Pancreas (tissue), 10 donors: ENCODE measurements at regions of chr2 and their contacts with region 1.

Region 1: DNA sequence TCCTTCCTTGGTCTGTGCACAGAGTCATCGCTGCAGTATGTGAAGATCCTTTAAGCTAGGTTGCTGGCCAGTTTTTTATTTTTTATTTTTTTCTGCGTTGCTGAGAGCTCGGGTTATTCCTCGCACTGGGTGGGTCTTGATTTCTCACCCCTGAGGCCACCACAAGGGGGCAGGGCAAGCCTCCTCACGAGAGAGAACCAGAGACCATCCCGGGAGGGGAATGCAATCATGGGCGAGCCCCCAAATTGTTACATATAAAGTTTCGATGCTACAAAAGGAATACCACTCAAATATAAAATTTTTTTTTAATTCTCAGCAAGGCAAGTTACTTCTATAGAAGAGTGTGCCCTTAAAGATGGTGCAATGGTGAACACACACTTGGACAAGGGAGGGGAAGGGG is 24.9 kb downstream of the HTR2B start:
- DNase-seq: no peak
- ATAC-seq: no peak
- H3K4me3 ChIP-seq: no peak overlapping the region
- H3K27ac ChIP-seq: no peak overlapping the region
- H3K4me1 ChIP-seq: no peaks in the 10 kb centered on the region
- H3K27me3 ChIP-seq: no peaks in the 10 kb centered on the region
- CTCF ChIP-seq: no peak

Region 2: DNA sequence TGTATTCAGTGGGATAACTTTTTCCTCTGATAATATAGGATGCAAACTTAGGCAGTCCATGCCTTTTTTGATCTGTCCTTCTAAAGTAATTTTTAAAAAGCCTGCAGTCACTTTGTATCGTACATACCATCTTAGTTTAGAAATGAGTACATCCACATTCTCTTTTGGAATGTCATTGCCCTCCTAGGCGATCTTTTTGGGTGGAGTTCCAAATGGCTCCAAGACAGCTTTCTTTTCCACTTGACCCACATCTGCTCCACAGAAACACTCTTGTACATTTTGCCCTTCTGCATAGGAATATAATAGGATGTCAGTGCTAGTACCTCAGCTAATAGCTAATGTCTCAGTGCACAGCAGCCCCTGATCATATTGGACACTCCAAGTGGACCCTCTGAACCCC is 46.7 kb after region 1 on chr2:
- intact Hi-C with region 1: no loop called
- DNase-seq: no peak
- ATAC-seq: no peak
- H3K4me3 ChIP-seq: no peak overlapping the region
- H3K27ac ChIP-seq: no peak overlapping the region
- H3K4me1 ChIP-seq: no peaks in the 10 kb centered on the region
- H3K27me3 ChIP-seq: no peaks in the 10 kb centered on the region
- CTCF ChIP-seq: no peak

Region 3: GRCh38 chr2:231452799-231453508 is 353.0 kb after region 1 on chr2:
- intact Hi-C with region 1: loop called in 1 of 3 experiments (anchors 10 kb)
- DNase-seq: peak in 1 of 6 donors; percentile 48
- ATAC-seq: peak; percentile 28 to 47 (median 32)
- H3K4me3 ChIP-seq: no peak overlapping the region
- H3K27ac ChIP-seq: no peak overlapping the region
- H3K4me1 ChIP-seq: no peaks in the 10 kb centered on the region
- H3K27me3 ChIP-seq: no peaks in the 10 kb centered on the region
- CTCF ChIP-seq: no peak